Activated CD4-positive, alpha-beta memory T cell treated with anti-CD3 and anti-CD28 coated beads for 36 hours (primary cell): ENCODE measurements at regions of chr1 and their contacts with region 1.

Region 1: DNA sequence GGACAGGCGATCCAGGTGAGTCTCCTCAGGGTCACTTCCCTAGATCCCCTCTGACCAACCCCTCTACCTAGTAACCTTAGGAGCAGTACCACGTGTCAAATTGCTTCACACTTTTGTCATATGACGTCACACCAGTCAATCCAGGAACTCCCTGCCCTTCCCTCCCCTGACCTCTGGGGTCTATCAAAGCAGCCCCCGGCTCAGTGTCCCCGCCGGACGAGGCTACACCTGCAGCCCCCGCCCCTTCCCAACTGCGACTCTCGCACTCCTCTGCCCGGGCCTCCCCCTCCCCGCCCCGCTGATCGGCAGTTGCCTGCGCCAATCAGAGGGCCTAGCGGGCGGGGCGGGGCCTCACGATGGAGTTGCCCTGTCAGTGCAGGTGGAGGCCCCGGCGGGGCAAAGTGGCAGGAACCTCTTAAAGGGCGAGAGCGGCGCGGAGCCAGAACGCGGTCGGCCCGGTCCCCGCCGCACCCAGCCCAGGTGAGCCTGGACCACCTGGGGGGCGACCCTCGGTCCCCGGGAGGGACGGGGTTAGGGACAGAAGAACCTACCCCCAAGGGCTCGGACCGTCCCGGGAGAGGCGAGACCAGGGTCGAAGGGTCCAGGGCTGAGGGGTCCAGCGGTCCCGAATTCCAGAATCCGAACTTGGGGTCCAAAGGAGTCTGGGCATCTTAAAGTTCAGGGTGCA is 27.5 kb upstream of the EPB41 start:
- DNase-seq: peak; percentile 93
- H3K4me3 Mint-ChIP-seq: peak overlapping the region; percentile 80
- H3K27ac Mint-ChIP-seq: peak overlapping the region; percentile 91
- H3K4me1 Mint-ChIP-seq: peaks cover 52% of the 10 kb centered on the region
- H3K27me3 Mint-ChIP-seq: no peaks in the 10 kb centered on the region

Region 2: GRCh38 chr1:28417429-28417922 is 469.4 kb before region 1 on chr1:
- CTCF ChIA-PET with region 1: no interaction called
- POLR2A ChIA-PET with region 1: no interaction called
- intact Hi-C with region 1: no loop called
- DNase-seq: peak; percentile 41
- H3K4me3 Mint-ChIP-seq: no peak overlapping the region
- H3K27ac Mint-ChIP-seq: no peak overlapping the region
- H3K4me1 Mint-ChIP-seq: peaks cover 12% of the 10 kb centered on the region
- H3K27me3 Mint-ChIP-seq: no peaks in the 10 kb centered on the region

Region 3: DNA sequence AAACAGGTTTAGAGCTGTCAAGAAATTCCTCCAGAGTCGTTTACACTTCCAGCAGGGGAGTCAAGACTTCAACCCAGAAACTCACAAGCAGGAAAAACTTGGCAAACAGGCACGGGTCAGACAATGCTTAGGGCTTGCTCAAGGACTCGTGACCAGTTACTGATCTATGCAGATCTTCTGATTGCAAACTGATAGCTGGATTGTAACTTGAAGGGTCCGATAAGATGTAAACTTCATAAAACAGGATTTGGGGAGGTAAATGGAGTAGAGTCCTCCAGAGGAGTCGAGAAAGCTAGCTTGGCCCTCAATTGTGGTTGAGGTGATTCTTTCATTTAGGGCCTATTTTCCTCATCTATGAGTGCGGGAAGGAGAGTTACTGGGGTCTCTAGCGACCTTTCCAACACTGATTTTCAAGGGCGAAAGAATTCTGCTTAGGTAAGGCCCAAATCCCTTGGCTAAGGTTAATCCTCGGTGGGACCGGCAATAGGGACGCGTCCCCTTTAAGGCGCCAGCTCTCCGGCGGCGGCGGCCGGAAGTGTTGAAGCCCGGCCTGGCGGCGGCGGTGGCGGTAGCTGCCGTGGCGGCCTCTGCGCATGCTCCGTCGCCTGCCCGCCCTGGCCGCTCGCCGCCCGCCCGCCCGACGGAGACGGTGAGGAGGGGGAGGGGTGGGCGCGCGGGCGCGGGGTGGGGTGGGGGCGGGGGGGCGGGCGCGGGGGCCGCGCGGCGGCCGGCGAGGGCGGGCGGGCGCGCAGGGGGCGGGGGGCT is 218.5 kb before region 1 on chr1 and contains the start of gene GMEB1:
- CTCF ChIA-PET with region 1: no interaction called
- POLR2A ChIA-PET with region 1: no interaction called
- intact Hi-C with region 1: loop called (anchors 2 kb)
- DNase-seq: peak; percentile 91
- H3K4me3 Mint-ChIP-seq: peak within 1 kb of the TSS; percentile 95
- H3K27ac Mint-ChIP-seq: peak within 1 kb of the TSS; percentile 99
- H3K4me1 Mint-ChIP-seq: peaks cover 12% of the 10 kb centered on the region
- H3K27me3 Mint-ChIP-seq: no peaks in the 10 kb centered on the region
- total RNA-seq, gene GMEB1: 21.4 to 22.6 TPM

Region 4: GRCh38 chr1:28926629-28927265 is 39.9 kb after region 1 on chr1:
- CTCF ChIA-PET with region 1: interaction called, 7 read pairs
- POLR2A ChIA-PET with region 1: no interaction called
- intact Hi-C with region 1: loop called (anchors 5 kb)
- DNase-seq: peak; percentile 23
- H3K4me3 Mint-ChIP-seq: peak overlapping the region; percentile 57
- H3K27ac Mint-ChIP-seq: peak overlapping the region; percentile 85
- H3K4me1 Mint-ChIP-seq: peaks cover 55% of the 10 kb centered on the region
- H3K27me3 Mint-ChIP-seq: no peaks in the 10 kb centered on the region

Region 5: DNA sequence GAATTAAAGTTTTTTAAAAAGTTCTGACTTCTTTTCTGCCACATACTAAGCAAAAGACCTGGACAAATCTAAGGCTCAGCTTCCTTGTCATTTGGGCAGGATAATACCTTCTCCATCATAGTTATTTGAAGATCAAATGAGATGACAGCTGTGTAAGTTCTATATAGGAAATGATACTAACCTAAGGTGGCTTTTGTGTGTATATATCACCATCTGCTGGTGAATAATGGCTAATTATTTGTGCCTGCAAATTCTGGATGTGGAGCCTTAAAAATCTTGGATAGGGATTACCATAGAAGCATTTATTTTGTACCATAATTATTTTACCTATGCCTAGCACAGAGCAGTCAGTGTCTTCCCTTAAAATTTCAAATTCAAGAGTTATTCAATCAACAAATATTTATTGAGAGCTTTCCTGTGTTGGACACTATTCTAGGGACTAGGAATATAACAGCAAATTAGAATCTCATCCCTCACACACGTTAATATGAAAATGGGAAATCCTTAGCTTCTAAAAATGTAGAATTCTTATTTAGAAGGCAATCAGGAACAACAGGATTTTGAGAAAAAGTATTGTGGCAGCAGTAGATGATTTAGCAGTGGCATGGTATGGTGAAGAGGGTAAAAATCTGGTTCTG is 147.1 kb after region 1 on chr1:
- CTCF ChIA-PET with region 1: interaction called, 401 read pairs
- POLR2A ChIA-PET with region 1: interaction called, 7 read pairs
- intact Hi-C with region 1: loop called (anchors 1 kb)
- DNase-seq: no peak
- H3K4me3 Mint-ChIP-seq: no peak overlapping the region
- H3K27ac Mint-ChIP-seq: no peak overlapping the region
- H3K4me1 Mint-ChIP-seq: no peaks in the 10 kb centered on the region
- H3K27me3 Mint-ChIP-seq: no peaks in the 10 kb centered on the region

Region 6: DNA sequence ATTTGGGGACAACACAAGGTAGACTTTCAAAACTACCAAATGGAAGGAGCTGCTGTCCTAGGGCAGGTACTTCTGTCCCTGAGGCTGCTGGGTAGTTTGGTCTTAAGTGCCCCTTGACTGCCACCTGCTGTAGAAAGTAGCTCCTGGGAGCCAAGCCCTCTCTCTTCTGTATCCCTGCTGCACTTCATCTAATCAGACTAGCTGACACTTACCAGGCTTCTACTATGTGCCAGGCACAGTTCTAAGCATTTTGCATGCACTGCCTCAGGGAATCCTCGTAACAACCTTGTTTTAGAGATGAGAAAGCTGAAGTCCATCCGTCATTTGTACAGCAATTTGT is 310.7 kb after region 1 on chr1:
- CTCF ChIA-PET with region 1: interaction called, 43 read pairs
- POLR2A ChIA-PET with region 1: no interaction called
- intact Hi-C with region 1: loop called (anchors 1 kb)
- DNase-seq: peak; percentile 50
- H3K4me3 Mint-ChIP-seq: no peak overlapping the region
- H3K27ac Mint-ChIP-seq: no peak overlapping the region
- H3K4me1 Mint-ChIP-seq: peaks cover 3% of the 10 kb centered on the region
- H3K27me3 Mint-ChIP-seq: no peaks in the 10 kb centered on the region